K562 (cell line): ENCODE measurements at regions of chr1 and their contacts with region 1.

Region 1: GRCh38 chr1:221549815-221550214 is 192.1 kb downstream of the DUSP10 start:
- DNase-seq: no peak
- ATAC-seq: no peak
- H3K4me3 ChIP-seq: no peak overlapping the region
- H3K27ac ChIP-seq: no peak overlapping the region
- H3K4me1 ChIP-seq: no peaks in the 10 kb centered on the region
- H3K27me3 ChIP-seq: no peaks in the 10 kb centered on the region; a peak in 1 of 5 replicates
- CTCF ChIP-seq: no peak
- EP300 ChIP-seq: no peak
- POLR2A ChIP-seq: no peak
- RAD21 ChIP-seq: no peak

Region 2: DNA sequence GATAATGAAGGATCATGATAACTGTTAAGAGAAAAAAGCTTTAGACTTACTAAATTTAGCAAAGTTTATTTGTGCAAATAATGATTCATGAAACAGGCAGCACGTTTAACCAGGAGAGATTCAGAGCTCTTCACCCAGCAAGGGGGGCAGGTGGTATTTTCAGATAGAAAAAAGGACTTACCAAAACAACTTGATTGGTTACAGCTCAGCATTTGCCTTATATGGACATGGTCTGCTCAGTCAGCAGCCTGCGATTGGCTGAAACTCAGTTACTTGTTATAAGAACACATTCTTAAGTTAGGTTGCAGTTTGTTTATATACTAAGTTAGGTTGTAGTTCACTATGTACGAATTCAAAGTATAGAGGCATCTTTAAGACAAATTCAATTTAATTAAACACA is 26.5 kb after region 1 on chr1:
- CTCF ChIA-PET with region 1: no interaction called
- POLR2A ChIA-PET with region 1: no interaction called
- in situ Hi-C with region 1: no loop called
- intact Hi-C with region 1: no loop called
- DNase-seq: peak in 1 of 4 experiments; percentile 30
- ATAC-seq: peak; percentile 63
- H3K4me3 ChIP-seq: no peak overlapping the region
- H3K27ac ChIP-seq: no peak overlapping the region
- H3K4me1 ChIP-seq: no peaks in the 10 kb centered on the region; a peak in 1 of 5 replicates
- H3K27me3 ChIP-seq: no peaks in the 10 kb centered on the region
- CTCF ChIP-seq: no peak
- EP300 ChIP-seq: no peak
- POLR2A ChIP-seq: no peak
- RAD21 ChIP-seq: no peak

Region 3: GRCh38 chr1:221594576-221594975 is 44.8 kb after region 1 on chr1:
- CTCF ChIA-PET with region 1: no interaction called
- POLR2A ChIA-PET with region 1: no interaction called
- in situ Hi-C with region 1: no loop called
- intact Hi-C with region 1: loop called (anchors 5 kb)
- DNase-seq: no peak
- ATAC-seq: no peak
- H3K4me3 ChIP-seq: no peak overlapping the region
- H3K27ac ChIP-seq: no peak overlapping the region
- H3K4me1 ChIP-seq: no peaks in the 10 kb centered on the region
- H3K27me3 ChIP-seq: no peaks in the 10 kb centered on the region
- CTCF ChIP-seq: no peak
- EP300 ChIP-seq: no peak
- POLR2A ChIP-seq: no peak
- RAD21 ChIP-seq: no peak